ENCODE measurements at regions of chr4 and their contacts with region 1.

Region 1: GRCh38 chr4:128809477-128810330 is at the start of gene JADE1:
- DNase-seq: peak; percentile 96
- total RNA-seq, gene JADE1: 36.6 to 46.1 TPM

Region 2: GRCh38 chr4:128454281-128455075 is 355.2 kb before region 1 on chr4:
- intact Hi-C with region 1: loop called (anchors 5 to 10 kb)
- DNase-seq: peak; percentile 93

Region 3: GRCh38 chr4:128565565-128566186 is 244.0 kb before region 1 on chr4:
- intact Hi-C with region 1: loop called (anchors 10 kb)
- DNase-seq: no peak

Region 4: GRCh38 chr4:128574706-128575105 is 235.0 kb before region 1 on chr4:
- intact Hi-C with region 1: loop called (anchors 10 kb)
- DNase-seq: no peak

Region 5: DNA sequence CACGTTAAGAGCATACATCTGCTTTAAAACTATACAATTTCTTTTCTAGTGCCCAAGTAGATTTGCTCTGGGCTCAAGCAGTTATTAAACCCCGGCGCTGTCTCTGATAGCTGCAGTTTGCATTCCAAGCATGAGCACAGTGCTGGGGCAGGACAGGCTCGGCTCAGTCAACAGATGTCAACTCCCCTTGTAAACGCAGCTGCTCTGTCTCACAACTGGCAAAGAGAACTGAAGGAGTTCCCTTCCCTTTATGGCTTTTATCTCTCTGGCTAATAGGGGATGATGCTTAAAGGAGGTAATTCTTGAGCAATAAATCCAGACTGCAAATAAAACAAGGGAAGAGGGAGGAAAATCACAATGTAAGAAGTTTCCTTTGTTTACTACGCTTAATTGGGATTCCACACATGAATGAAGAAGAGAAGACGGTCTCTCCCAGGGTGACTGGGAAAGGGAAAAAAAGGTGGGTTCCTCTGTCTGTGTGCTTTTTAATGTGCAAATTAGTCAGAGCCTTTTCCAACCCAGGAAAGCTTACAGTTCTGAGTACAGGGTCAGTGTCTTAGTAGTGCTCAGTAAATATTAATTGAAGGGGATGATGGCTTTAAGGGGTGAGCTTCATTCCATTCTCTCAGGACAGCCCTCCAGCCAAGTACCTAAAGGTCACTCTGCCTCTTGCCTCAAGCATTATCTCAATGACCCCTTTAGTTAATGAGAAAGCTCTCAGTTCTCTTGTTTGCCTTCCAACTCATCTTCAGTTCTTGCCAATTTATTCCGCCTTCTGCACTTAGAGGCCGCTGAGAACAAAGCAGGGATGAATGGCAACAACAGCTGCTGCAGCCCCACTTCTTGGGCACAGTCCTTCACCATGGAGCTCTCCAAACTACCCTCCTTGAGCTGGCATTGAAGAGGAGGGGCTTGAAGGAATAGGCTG is 155.9 kb before region 1 on chr4:
- intact Hi-C with region 1: loop called in 1 of 2 experiments (anchors 10 kb)
- DNase-seq: no peak

Region 6: DNA sequence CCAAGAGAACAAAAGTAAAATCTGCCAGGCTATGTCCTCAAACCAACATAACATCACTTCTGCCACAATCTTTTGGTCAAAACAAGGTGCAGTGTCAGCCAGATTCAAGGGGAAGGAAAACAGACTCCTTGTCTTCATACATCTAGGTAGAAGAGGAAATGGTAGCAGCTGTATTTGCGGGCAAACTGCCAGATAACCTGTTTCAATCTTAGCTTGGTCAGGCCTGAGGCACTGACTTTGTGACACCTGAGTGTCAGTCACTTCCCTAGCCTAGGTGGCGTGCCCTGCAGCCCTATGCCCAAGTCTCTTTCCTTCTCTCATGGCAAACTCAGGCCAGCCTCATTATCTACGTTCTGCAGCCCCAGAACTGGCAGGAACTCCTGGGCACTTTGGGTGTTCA is 146.4 kb before region 1 on chr4:
- intact Hi-C with region 1: loop called (anchors 10 kb)
- DNase-seq: no peak

Region 7: GRCh38 chr4:128880662-128881061 is 71.0 kb after region 1 on chr4:
- intact Hi-C with region 1: no loop called
- DNase-seq: no peak